Naive thymus-derived CD8-positive, alpha-beta T cell (primary cell): ENCODE measurements at regions of chr1 and their contacts with region 1.

Region 1: DNA sequence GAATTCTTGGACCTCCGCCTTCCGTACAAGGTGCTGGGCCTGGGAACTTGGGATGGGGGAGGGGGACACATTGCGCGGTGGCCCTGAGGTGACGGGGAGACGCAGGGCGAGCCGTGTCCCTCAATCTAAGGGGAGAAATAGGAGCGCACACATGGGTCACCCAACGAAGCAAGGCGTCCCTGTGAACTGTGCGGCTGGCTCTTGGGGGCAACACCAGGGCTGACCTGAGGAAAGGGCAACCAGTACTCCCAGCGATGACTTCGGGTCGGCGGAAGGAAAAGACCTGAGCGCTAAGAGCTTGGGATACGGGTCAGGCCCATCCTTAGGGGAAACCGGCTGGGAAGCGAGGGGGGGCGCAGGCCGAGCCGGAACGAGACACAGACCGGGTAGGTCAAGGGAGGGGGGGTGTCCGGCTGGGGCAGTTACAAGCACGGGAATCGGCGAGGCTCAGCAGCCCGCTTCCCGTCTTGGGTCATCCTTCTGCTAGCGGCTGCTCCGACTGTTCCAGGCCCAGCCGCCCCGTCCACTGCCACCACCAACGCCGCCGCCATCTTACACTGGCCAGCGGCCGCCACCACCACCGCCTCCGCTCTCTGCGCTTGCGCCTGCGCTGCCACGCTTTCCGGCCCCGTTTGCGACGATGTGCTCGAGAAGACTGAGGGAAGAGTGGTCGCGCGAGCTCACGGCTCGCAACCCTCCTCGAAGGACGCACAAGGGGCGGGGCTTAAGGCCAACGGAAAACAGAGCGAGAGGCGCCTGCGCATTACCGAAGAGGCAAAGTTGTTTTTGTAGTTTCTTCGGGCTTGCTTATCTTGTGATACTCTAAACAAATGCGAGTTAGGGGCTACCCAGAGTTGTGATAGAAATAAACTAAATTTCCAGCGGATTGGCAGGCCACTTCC is at the start of gene DCAF8:
- DNase-seq: peak; percentile 92 to 99 (median 96)
- ATAC-seq: peak; percentile 85 to 87
- H3K4me3 Mint-ChIP-seq: peak within 1 kb of the TSS; percentile 95 to 99 (median 97)
- H3K27ac Mint-ChIP-seq: peak within 1 kb of the TSS; percentile 96 to 100 (median 98)
- H3K4me1 Mint-ChIP-seq: peaks cover 16 to 54% (median 45%) of the 10 kb centered on the region in 4 donors
- H3K27me3 Mint-ChIP-seq: no peaks in the 10 kb centered on the region
- polyA plus RNA-seq, gene DCAF8: 46.9 to 51.6 (median 49.5) TPM

Region 2: DNA sequence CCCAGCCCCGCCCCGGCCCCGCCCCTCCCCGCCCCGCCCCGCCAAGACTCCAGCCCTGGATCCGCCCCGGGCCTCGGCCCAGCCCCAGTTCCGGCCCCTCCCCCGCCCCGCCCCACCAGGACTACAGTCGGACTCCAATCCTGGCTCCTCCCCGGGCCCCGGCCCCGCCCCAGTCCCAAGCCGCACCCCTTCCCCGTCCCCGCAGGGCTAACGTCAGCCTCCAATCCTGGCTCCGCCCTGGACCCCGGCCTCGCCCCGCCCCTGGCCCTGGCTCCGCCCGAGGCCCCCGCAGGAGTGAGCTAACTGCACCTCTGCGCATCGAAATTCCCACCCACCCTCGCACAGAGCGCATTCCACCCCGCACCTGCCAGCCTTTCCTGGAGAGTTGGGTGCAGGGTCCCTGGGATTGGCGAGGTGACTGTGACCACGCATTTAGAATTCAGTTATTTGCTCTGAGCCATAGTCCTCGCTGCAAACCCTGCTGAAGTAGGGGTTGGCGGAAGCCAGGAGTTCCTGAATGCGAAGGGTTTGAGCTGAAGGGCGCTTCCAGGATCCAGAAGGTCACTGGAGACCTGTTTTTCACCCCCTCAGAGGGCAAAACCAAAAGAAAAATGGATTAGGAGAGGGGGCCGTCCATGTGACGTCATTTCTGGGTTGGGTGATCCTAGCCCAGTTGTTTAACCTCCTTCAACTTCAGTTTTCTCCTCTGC is 163.1 kb before region 1 on chr1:
- POLR2A ChIA-PET with region 1: interaction called, 16 read pairs
- DNase-seq: peak; percentile 94 to 99 (median 98)
- ATAC-seq: peak; percentile 78 to 79
- H3K4me3 Mint-ChIP-seq: peak overlapping the region; percentile 74 to 97 (median 84)
- H3K27ac Mint-ChIP-seq: peak overlapping the region; percentile 88 to 100 (median 99)
- H3K4me1 Mint-ChIP-seq: peaks cover 39 to 86% (median 81%) of the 10 kb centered on the region in 4 donors
- H3K27me3 Mint-ChIP-seq: no peaks in the 10 kb centered on the region

Region 3: GRCh38 chr1:160179336-160179735 is 82.8 kb before region 1 on chr1:
- POLR2A ChIA-PET with region 1: no interaction called
- DNase-seq: no peak
- ATAC-seq: no peak
- H3K4me3 Mint-ChIP-seq: no peak overlapping the region
- H3K27ac Mint-ChIP-seq: no peak overlapping the region
- H3K4me1 Mint-ChIP-seq: peaks cover 0 to 2% (median 0%) of the 10 kb centered on the region in 4 donors
- H3K27me3 Mint-ChIP-seq: peaks cover 0 to 10% (median 6%) of the 10 kb centered on the region in 5 donors

Region 4: GRCh38 chr1:160205242-160206035 is 56.7 kb before region 1 on chr1 and contains the start of gene PEA15:
- POLR2A ChIA-PET with region 1: interaction called, 10 read pairs
- DNase-seq: peak; percentile 37 to 77 (median 56)
- ATAC-seq: peak; percentile 82 to 90
- H3K4me3 Mint-ChIP-seq: peak within 1 kb of the TSS; percentile 83 to 95 (median 88)
- H3K27ac Mint-ChIP-seq: peak within 1 kb of the TSS; percentile 72 to 95 (median 88)
- H3K4me1 Mint-ChIP-seq: peaks cover 20 to 48% (median 38%) of the 10 kb centered on the region in 4 donors
- H3K27me3 Mint-ChIP-seq: no peaks in the 10 kb centered on the region
- polyA plus RNA-seq, gene PEA15: 3.9 to 4.6 (median 4.3) TPM

Region 5: DNA sequence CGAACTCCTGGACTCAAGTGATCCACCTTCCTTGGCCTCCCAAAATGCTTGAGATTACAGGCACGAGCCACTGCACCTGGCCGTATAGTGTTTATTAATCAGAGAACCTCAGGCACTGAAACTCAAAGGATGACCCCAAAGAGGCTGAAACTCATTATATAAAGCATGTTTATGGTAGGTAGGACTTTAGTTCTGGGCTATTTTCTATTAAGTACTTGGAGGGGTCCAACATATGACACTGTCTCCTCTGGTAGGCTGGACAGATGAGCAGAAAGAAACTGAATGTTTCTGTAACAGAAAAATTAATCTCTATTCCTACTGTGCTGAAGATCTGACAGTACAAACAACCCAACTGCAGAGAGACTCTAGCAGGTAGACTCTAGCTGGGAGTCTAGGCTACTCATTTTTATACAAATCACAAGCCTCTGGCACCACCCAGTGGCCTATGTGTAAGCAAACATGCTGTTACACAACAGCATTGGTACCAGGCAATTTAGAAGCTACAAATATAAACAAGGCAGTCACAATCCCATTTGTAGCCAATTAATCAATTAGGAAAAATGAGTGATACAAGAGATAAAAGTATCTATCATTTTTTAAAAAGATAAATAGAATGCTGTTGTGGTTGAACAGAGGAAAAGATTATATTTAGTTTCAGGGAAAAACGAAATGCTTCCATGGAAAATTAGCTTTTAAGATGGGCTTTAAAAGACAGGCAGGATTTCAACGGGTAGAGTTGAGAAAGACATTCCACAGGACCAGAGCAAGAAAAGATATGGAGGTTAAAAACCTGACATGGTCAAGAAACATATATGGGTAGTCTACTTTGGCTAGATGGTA is 10.2 kb before region 1 on chr1:
- POLR2A ChIA-PET with region 1: interaction called, 22 read pairs
- DNase-seq: peak; percentile 28 to 77 (median 57)
- ATAC-seq: peak; percentile 98 to 99
- H3K4me3 Mint-ChIP-seq: no peak overlapping the region
- H3K27ac Mint-ChIP-seq: peak overlapping the region; percentile 48 to 90 (median 78)
- H3K4me1 Mint-ChIP-seq: peaks cover 14 to 29% (median 19%) of the 10 kb centered on the region in 4 donors
- H3K27me3 Mint-ChIP-seq: no peaks in the 10 kb centered on the region

Region 6: GRCh38 chr1:160277330-160277729 is 15.2 kb after region 1 on chr1:
- POLR2A ChIA-PET with region 1: interaction called, 11 read pairs
- DNase-seq: no peak
- ATAC-seq: no peak
- H3K4me3 Mint-ChIP-seq: no peak overlapping the region
- H3K27ac Mint-ChIP-seq: no peak overlapping the region
- H3K4me1 Mint-ChIP-seq: peaks cover 0 to 1% (median 0%) of the 10 kb centered on the region in 4 donors
- H3K27me3 Mint-ChIP-seq: no peaks in the 10 kb centered on the region

Region 7: GRCh38 chr1:160284782-160285344 is 22.7 kb after region 1 on chr1 and contains the start of gene PEX19:
- POLR2A ChIA-PET with region 1: interaction called, 47 read pairs
- DNase-seq: peak; percentile 86 to 96 (median 92)
- ATAC-seq: peak; percentile 99 to 100
- H3K4me3 Mint-ChIP-seq: peak within 1 kb of the TSS; percentile 92 to 100 (median 98)
- H3K27ac Mint-ChIP-seq: peak within 1 kb of the TSS; percentile 91 to 98 (median 95)
- H3K4me1 Mint-ChIP-seq: peaks cover 17 to 34% (median 29%) of the 10 kb centered on the region in 4 donors
- H3K27me3 Mint-ChIP-seq: peaks cover 0 to 1% (median 0%) of the 10 kb centered on the region in 5 donors
- polyA plus RNA-seq, gene PEX19: 49.7 to 56.2 (median 53.1) TPM